ENCODE measurements at regions of chr7 and their contacts with region 1.

Region 1: DNA sequence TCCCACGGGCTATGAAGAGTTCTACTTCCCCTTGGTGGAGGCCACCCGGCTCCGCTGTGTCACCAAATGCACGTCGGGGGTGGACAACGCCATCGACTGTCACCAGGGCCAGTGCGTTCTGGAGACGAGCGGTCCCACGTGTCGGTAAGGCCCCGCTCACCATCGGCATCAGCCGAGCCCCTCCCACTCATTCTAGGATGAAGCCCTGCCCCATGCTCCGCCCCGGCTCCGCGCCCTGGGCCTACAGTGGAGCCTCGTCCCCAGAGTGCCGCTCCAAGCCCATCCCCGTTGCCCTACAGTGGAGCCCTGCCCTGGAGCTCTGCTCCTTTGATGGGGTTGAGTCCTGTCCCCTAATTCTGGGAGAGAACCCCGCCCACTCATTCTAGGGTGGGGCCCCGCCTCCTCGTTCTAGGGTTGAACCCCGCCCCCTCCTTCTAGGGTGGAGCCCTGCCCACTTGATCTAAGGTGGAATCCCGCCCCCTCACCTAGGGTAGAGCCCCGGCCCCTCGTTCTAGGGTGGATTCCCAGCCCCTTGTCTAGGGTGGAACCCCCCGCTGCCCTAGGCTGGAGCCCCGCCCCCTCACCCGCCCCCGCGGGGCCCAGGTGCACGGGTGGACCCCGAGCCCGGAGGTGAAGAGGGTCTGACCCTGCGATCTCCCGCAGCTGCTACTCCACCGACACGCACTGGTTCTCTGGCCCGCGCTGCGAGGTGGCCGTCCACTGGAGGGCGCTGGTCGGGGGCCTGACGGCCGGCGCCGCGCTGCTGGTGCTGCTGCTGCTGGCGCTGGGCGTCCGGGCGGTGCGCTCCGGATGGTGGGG is 3.4 kb upstream of the MUC12 start:
- DNase-seq: no peak
- ATAC-seq: peak; percentile 94
- H3K4me3 ChIP-seq: no peak overlapping the region
- H3K27ac ChIP-seq: no peak overlapping the region
- H3K4me1 ChIP-seq: no peaks in the 10 kb centered on the region
- H3K27me3 ChIP-seq: peaks cover 53% of the 10 kb centered on the region
- CTCF ChIP-seq: peak; percentile 81
- POLR2A ChIP-seq: no peak
- RAD21 ChIP-seq: peak; percentile 72

Region 2: GRCh38 chr7:101058355-101058754 is 92.4 kb after region 1 on chr7:
- CTCF ChIA-PET with region 1: no interaction called
- POLR2A ChIA-PET with region 1: no interaction called
- dilution Hi-C with region 1: no loop called
- in situ Hi-C with region 1: loop called (anchors 5 kb)
- intact Hi-C with region 1: loop called (anchors 1 kb)
- DNase-seq: peak; percentile 50
- ATAC-seq: peak; percentile 74
- H3K4me3 ChIP-seq: no peak overlapping the region
- H3K27ac ChIP-seq: no peak overlapping the region
- H3K4me1 ChIP-seq: no peaks in the 10 kb centered on the region
- H3K27me3 ChIP-seq: peaks cover 25% of the 10 kb centered on the region
- CTCF ChIP-seq: no peak
- POLR2A ChIP-seq: no peak
- RAD21 ChIP-seq: no peak

Region 3: DNA sequence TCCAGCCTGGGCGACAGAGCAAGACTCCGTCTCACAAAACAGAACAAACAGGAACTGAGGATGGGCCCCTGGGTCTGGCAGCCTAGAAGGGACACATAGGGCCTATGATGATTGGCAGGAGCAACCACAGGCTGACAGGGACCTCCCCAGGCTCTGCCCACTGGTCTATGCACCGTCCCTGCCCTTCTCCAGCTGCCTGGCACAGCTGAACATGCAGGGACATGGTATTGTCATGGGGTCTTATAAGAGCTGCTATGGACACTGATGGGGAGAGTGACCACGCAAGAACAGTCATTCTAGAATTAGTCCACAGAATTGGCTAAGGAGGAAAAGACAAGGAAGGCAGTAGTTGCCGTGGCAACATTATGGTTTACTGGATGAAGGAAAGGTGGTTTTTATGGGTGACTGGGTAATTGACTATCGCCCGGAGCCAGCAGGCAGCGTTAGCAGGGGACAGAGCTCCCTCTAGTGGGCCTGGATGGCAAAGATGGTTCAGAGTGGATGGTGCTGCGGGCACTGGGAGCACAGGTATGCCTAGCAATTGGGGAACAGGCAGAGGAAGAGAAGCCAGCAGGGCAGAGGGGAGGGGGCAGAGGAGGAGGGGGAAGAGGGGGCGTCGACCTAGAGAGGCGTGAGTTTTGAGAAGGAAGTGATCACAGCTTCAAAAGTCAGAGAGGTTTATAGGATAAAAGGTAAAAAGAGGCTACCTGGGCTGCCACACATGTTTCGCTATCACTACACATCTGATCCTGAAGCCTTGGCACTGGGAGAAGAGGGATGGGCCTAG is 111.6 kb after region 1 on chr7:
- CTCF ChIA-PET with region 1: no interaction called
- POLR2A ChIA-PET with region 1: no interaction called
- dilution Hi-C with region 1: no loop called
- in situ Hi-C with region 1: no loop called
- intact Hi-C with region 1: no loop called
- DNase-seq: peak; percentile 64
- ATAC-seq: peak; percentile 100
- H3K4me3 ChIP-seq: no peak overlapping the region
- H3K27ac ChIP-seq: no peak overlapping the region
- H3K4me1 ChIP-seq: no peaks in the 10 kb centered on the region
- H3K27me3 ChIP-seq: peaks cover 11% of the 10 kb centered on the region
- CTCF ChIP-seq: peak; percentile 88
- POLR2A ChIP-seq: no peak
- RAD21 ChIP-seq: peak; percentile 93

Region 4: DNA sequence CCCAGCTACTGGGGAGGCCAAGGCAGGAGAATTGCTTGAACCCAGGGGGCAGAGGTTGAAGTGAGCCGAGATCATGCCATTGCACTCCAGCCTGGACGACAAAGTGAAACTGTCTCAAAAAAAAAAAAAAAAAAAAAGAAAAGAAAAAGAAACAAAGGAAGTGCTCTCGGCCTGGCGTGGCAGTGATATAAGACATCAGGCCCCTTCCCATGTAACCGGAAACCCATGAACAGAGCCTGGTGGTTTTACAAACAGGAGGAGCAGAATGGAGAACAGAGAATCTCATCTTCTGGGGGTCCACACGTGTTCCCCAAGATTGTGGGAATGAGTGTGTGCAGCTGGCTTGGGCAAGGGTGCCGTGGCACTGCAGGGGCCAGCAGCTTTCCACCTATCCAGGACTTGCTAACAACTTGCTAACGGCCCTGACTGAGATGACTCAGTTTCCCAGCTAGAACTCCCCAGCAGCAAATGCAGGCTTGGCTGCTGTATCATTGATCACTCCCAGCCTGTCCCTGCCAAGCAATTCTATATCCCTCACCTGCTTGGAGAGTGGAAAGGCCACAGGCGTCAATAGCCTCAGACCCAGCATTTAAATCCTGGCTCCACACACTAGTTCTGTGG is 499.8 kb after region 1 on chr7:
- CTCF ChIA-PET with region 1: no interaction called
- POLR2A ChIA-PET with region 1: no interaction called
- dilution Hi-C with region 1: no loop called
- in situ Hi-C with region 1: loop called (anchors 25 kb)
- intact Hi-C with region 1: no loop called
- DNase-seq: no peak
- ATAC-seq: no peak
- H3K4me3 ChIP-seq: no peak overlapping the region
- H3K27ac ChIP-seq: no peak overlapping the region
- H3K4me1 ChIP-seq: peaks cover 1% of the 10 kb centered on the region; the same call in 1 of the 2 replicates
- H3K27me3 ChIP-seq: peaks cover 15% of the 10 kb centered on the region
- CTCF ChIP-seq: no peak
- POLR2A ChIP-seq: no peak
- RAD21 ChIP-seq: no peak